ENCODE measurements at regions of chr2 and their contacts with region 1.

Region 1: DNA sequence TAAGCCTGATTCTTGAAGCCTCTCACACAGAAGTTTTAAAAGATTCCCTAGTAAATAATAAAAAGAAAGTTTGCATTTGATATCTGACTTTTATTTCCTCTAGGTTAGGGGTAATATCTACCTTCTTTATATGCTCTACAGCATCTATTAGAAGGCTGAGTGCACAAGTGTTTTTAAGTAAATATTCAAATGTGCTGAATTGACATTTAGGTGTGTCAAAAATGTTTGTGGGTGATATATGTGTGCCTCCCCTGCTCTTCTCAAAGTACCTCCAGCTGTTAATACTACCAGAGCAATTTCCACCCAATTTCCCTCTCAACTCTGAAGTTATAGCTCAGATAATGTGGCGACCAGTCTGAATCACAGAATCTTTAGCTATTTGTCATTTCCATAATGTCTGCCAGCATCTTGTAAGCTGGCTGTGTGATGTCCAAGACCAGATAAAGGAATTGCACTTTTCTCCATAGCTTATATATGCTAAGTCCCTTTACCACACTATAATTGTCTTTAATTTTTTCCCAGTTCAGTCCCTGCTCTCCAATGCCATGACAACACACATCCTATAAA is 24.4 kb upstream of the ERMN start:
- DNase-seq: no peak
- ATAC-seq: no peak
- H3K4me3 ChIP-seq: no peak overlapping the region
- H3K4me3 Mint-ChIP-seq: peak overlapping the region in 1 of 10 donors; percentile 14
- H3K27ac ChIP-seq: no peak overlapping the region
- H3K27ac Mint-ChIP-seq: peak overlapping the region in 4 of 9 donors; percentile 31 to 77 (median 46)
- H3K4me1 ChIP-seq: peaks cover 0 to 25% of the 10 kb centered on the region in 2 donors
- H3K4me1 Mint-ChIP-seq: peaks cover 0 to 81% (median 65%) of the 10 kb centered on the region in 7 donors
- H3K27me3 ChIP-seq: no peaks in the 10 kb centered on the region
- H3K27me3 Mint-ChIP-seq: no peaks in the 10 kb centered on the region

Region 2: DNA sequence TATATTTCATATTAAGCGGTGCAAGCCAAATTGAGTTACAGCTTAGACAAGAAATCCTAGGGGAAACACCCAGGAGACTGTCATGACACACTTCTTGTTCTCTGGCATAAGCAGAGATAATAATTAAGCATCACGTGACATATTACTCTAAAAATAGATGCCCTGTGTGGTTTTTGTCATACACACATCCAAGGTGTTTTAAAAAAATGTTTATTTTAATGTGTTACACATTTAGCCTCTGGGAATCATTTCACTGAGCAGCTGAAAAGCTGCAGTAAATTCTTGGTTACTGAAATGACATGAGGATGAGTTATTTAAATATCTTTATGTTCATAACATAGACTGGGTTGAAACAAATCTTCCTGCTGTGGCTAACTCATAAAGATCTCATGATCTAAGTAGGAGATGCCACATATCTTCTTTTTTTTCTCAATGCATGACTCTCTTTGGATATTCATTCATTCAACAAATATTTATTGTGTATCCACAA is 13.6 kb after region 1 on chr2:
- CTCF ChIA-PET with region 1: interaction called, 4 read pairs
- POLR2A ChIA-PET with region 1: interaction called, 5 read pairs
- intact Hi-C with region 1: loop called in 1 of 2 experiments (anchors 1 kb)
- DNase-seq: no peak
- ATAC-seq: no peak
- H3K4me3 ChIP-seq: no peak overlapping the region
- H3K4me3 Mint-ChIP-seq: peak overlapping the region in 7 of 10 donors; percentile 11 to 67 (median 49)
- H3K27ac ChIP-seq: no peak overlapping the region
- H3K27ac Mint-ChIP-seq: peak overlapping the region in 5 of 9 donors; percentile 22 to 78 (median 49)
- H3K4me1 ChIP-seq: peaks cover 7 to 28% of the 10 kb centered on the region in 2 donors
- H3K4me1 Mint-ChIP-seq: peaks cover 15 to 64% (median 38%) of the 10 kb centered on the region in 7 donors
- H3K27me3 ChIP-seq: no peaks in the 10 kb centered on the region
- H3K27me3 Mint-ChIP-seq: no peaks in the 10 kb centered on the region

Region 3: DNA sequence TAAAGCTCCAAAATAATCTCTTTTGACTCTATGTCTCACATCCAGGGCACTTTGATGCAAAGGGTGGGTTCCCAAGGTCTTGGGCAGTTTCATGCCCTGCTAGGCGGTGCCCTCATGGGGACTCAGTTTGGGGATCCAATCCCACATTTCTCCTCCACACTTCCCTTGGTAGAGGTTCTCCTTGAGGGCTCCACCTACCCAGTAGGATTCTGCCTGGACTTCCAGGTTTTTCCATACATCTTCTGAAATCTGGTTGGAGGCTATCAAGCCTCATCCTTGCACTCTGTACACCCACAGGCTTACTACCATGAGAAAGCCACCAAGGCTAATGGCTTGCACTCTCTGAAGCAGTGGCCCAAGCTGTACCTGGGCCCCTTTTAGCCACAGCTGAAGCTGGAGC is 25.4 kb after region 1 on chr2:
- CTCF ChIA-PET with region 1: no interaction called
- POLR2A ChIA-PET with region 1: no interaction called
- intact Hi-C with region 1: no loop called
- DNase-seq: no peak
- ATAC-seq: no peak
- H3K4me3 ChIP-seq: no peak overlapping the region
- H3K4me3 Mint-ChIP-seq: no peak overlapping the region
- H3K27ac ChIP-seq: no peak overlapping the region
- H3K27ac Mint-ChIP-seq: peak overlapping the region in 4 of 9 donors; percentile 16 to 51 (median 35)
- H3K4me1 ChIP-seq: peaks cover 0 to 2% of the 10 kb centered on the region in 2 donors
- H3K4me1 Mint-ChIP-seq: peaks cover 3 to 35% (median 27%) of the 10 kb centered on the region in 7 donors
- H3K27me3 ChIP-seq: no peaks in the 10 kb centered on the region
- H3K27me3 Mint-ChIP-seq: no peaks in the 10 kb centered on the region

Measured in naive thymus-derived CD4-positive, alpha-beta T cell (primary cell).